ENCODE measurements at regions of chr1 and their contacts with region 1.

Region 1: GRCh38 chr1:50605186-50605875 is 182.1 kb upstream of the DMRTA2 start:
- DNase-seq: no peak
- H3K4me3 ChIP-seq: no peak overlapping the region
- H3K27ac ChIP-seq: peak overlapping the region in 1 of 4 donors; percentile 16
- H3K4me1 ChIP-seq: peaks cover 0 to 46% (median 4%) of the 10 kb centered on the region in 3 donors
- H3K27me3 ChIP-seq: no peaks in the 10 kb centered on the region
- CTCF ChIP-seq: peak in 5 of 6 experiments; percentile 28 to 73 (median 51)
- POLR2A ChIP-seq: no peak

Region 2: GRCh38 chr1:50308878-50309277 is 296.5 kb before region 1 on chr1:
- intact Hi-C with region 1: no loop called
- DNase-seq: no peak
- H3K4me3 ChIP-seq: no peak overlapping the region
- H3K27ac ChIP-seq: no peak overlapping the region
- H3K4me1 ChIP-seq: no peaks in the 10 kb centered on the region
- H3K27me3 ChIP-seq: peaks cover 0 to 8% (median 0%) of the 10 kb centered on the region in 4 donors
- CTCF ChIP-seq: no peak
- POLR2A ChIP-seq: no peak

Region 3: DNA sequence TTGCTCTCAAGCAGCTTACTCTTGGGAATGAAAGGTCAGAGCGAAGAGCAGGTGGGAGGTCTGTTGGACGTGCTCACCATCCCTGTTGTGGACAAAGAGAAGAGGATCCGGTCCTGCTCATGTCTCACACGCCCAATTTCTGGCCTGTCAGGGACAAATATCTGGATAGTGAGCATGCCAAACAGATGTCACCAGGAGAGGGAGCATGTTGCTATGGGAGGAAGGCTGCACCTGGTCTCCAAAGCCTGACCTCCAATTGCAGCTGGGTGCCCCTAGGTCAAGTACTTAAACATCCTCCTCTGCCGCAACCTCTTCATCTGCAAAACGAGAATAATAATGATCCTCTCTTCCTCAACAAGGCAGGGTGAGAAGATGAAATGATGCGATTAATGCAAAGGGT is 235.5 kb before region 1 on chr1:
- intact Hi-C with region 1: loop called (anchors 5 kb)
- DNase-seq: no peak
- H3K4me3 ChIP-seq: no peak overlapping the region
- H3K27ac ChIP-seq: no peak overlapping the region
- H3K4me1 ChIP-seq: peaks cover 0 to 9% (median 5%) of the 10 kb centered on the region in 3 donors
- H3K27me3 ChIP-seq: peaks cover 0 to 69% (median 0%) of the 10 kb centered on the region in 4 donors
- CTCF ChIP-seq: peak in 3 of 6 experiments; percentile 6 to 48 (median 22)
- POLR2A ChIP-seq: no peak

Region 4: GRCh38 chr1:50929376-50929958 is 324.1 kb after region 1 on chr1:
- intact Hi-C with region 1: no loop called
- DNase-seq: no peak
- H3K4me3 ChIP-seq: no peak overlapping the region
- H3K27ac ChIP-seq: no peak overlapping the region
- H3K4me1 ChIP-seq: peaks cover 0 to 4% (median 0%) of the 10 kb centered on the region in 3 donors
- H3K27me3 ChIP-seq: no peaks in the 10 kb centered on the region
- CTCF ChIP-seq: peak in 5 of 6 experiments; percentile 38 to 65 (median 55)
- POLR2A ChIP-seq: no peak